ENCODE measurements at regions of chr7 and their contacts with region 1.

Region 1: GRCh38 chr7:28921822-28922221 is 36.3 kb downstream of the TRIL start:
- DNase-seq: peak; percentile 67
- H3K4me3 ChIP-seq: no peak overlapping the region
- H3K27ac ChIP-seq: no peak overlapping the region
- H3K4me1 ChIP-seq: no peaks in the 10 kb centered on the region
- H3K27me3 ChIP-seq: peaks cover 4 to 6% of the 10 kb centered on the region in 2 experiments
- CTCF ChIP-seq: peak; percentile 74 to 76
- POLR2A ChIP-seq: no peak

Region 2: DNA sequence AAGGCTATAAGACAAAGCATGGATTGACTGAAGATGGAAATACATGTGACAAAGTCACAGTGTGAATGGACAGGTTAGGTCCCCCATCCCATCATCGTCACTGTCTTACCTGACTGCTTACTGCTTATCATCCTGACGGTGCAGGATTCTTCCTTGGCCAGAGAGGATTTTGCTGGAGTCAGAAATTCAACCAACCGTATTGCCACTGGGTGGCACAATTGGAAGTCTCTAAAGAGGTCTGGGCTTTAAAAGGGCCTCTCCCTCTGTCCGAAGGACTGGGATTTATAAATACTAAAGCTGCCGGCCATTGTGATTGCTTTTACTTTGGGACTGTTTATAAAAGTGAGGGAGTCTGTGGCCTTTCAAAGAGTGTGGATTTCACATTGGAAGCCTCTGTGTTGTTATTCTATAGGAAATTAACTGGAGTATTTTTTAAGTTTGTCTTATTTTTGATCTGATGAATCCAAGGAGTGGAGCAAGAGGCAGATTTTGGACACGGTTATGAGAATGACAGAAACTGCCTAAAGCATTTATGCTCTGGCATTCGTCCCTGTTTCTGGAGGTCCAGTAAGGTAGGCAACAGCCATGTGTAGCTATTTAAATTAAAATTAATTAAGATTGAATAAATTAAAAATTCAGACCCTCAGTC is 622.8 kb before region 1 on chr7:
- CTCF ChIA-PET with region 1: interaction called, 5 read pairs
- POLR2A ChIA-PET with region 1: no interaction called
- dilution Hi-C with region 1: no loop called
- intact Hi-C with region 1: loop called (anchors 5 kb)
- DNase-seq: peak; percentile 53
- H3K4me3 ChIP-seq: no peak overlapping the region
- H3K27ac ChIP-seq: no peak overlapping the region
- H3K4me1 ChIP-seq: no peaks in the 10 kb centered on the region
- H3K27me3 ChIP-seq: no peaks in the 10 kb centered on the region
- CTCF ChIP-seq: peak; percentile 36 to 48
- POLR2A ChIP-seq: no peak

Region 3: DNA sequence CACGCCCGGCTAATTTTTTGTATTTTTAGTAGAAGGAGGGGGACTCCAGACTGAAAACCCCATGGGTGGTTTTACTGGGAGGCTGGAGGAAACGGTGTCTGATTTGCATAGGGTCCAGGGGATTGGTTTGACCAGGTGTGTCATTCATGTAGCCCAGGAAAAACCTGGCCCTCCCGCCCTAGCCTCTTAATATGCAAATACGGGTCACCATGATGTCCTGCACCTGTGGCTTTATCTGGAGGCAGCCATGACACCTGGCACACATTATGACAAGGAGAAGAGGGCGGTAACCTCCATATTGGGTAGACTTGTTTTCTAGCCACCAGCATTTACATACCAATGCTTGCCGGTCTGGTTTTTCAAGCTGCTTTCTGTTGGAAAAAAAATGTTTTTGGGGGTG is 31.7 kb before region 1 on chr7:
- CTCF ChIA-PET with region 1: interaction called, 12 read pairs
- POLR2A ChIA-PET with region 1: no interaction called
- dilution Hi-C with region 1: no loop called
- intact Hi-C with region 1: no loop called
- DNase-seq: no peak
- H3K4me3 ChIP-seq: no peak overlapping the region
- H3K27ac ChIP-seq: no peak overlapping the region
- H3K4me1 ChIP-seq: no peaks in the 10 kb centered on the region
- H3K27me3 ChIP-seq: peaks cover 5 to 6% of the 10 kb centered on the region in 2 experiments
- CTCF ChIP-seq: no peak
- POLR2A ChIP-seq: no peak

Region 4: GRCh38 chr7:28955718-28956619 is 34.1 kb after region 1 on chr7:
- CTCF ChIA-PET with region 1: interaction called, 518 read pairs
- POLR2A ChIA-PET with region 1: interaction called, 4 read pairs
- dilution Hi-C with region 1: no loop called
- intact Hi-C with region 1: loop called (anchors 1 kb)
- DNase-seq: peak; percentile 57
- H3K4me3 ChIP-seq: peak overlapping the region in 2 of 3 experiments; percentile 13 to 16
- H3K27ac ChIP-seq: no peak overlapping the region
- H3K4me1 ChIP-seq: peaks cover 11% of the 10 kb centered on the region
- H3K27me3 ChIP-seq: peaks cover 18 to 26% of the 10 kb centered on the region in 2 experiments
- CTCF ChIP-seq: peak; percentile 77 to 86
- POLR2A ChIP-seq: no peak

Region 5: DNA sequence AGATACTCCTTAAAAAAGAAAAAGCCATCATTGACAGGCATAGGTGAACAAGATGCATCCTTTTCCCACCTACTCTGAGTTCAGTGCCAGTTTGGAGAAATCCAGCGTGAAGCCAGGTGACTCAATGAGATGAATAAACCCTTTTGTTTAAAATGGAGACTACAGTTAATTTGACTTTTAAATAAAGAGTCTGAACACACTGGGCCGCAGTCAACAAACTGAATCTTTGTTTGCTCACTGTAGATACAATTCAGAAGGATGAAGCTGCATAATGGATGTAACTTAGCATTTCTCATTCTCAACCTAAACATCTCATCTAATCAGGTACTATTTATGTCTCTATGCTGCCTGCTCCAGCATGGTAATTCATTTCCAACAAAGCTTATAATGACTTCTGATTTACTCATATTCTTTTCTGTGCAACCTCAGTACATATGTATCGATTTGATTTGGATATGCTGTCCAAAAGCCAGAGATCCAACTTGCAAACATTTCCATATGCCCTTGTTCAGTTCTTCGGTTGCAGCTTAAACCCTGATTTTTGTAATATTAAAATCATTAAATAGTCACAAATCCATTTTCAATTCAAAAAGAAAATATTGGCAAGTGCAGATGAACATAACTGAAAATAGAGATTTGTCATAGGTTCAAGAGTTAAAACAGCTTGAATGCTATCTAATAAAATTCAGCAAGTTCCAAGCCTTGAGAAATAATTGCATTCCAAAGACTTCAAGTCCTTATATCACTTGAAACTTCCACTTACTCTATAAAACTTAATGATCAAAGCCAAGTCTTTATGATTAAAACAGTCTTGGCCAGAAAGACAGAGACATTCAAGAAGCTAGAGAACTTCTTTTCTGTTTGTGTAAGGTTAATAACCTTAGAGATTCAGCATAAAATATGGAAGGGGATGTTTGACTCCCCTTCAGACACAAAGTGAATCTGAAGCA is 156.8 kb after region 1 on chr7:
- CTCF ChIA-PET with region 1: interaction called, 16 read pairs
- POLR2A ChIA-PET with region 1: no interaction called
- dilution Hi-C with region 1: no loop called
- intact Hi-C with region 1: no loop called
- DNase-seq: no peak
- H3K4me3 ChIP-seq: no peak overlapping the region
- H3K27ac ChIP-seq: no peak overlapping the region
- H3K4me1 ChIP-seq: no peaks in the 10 kb centered on the region
- H3K27me3 ChIP-seq: peaks cover 2 to 5% of the 10 kb centered on the region in 2 experiments
- CTCF ChIP-seq: no peak
- POLR2A ChIP-seq: no peak

Region 6: GRCh38 chr7:29276199-29276598 is 354.4 kb after region 1 on chr7:
- CTCF ChIA-PET with region 1: no interaction called
- POLR2A ChIA-PET with region 1: no interaction called
- dilution Hi-C with region 1: no loop called
- intact Hi-C with region 1: no loop called
- DNase-seq: no peak
- H3K4me3 ChIP-seq: no peak overlapping the region
- H3K27ac ChIP-seq: no peak overlapping the region
- H3K4me1 ChIP-seq: peaks cover under 1% of the 10 kb centered on the region
- H3K27me3 ChIP-seq: no peaks in the 10 kb centered on the region
- CTCF ChIP-seq: no peak
- POLR2A ChIP-seq: no peak

Region 7: DNA sequence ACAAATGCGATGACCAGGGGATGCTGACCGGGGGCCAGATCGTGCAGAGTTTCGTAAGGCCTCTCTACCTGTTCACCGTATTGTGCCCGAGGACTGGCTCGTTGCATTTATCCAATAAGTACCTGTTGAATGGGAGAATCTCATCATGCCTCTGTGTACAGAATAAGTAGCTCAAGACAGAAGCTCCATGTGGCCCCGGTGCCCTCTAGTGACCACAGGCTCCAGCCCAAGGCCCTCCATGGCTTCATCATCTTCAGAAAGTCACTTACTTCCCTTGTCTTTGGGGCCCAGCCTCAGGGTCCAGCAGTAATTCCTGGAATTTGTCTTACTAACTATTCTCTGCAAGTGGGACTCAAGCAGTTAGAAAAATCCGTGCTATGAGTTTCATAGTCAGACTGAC is 423.8 kb after region 1 on chr7:
- CTCF ChIA-PET with region 1: interaction called, 28 read pairs
- POLR2A ChIA-PET with region 1: no interaction called
- dilution Hi-C with region 1: no loop called
- intact Hi-C with region 1: loop called (anchors 1 kb)
- DNase-seq: peak; percentile 41
- H3K4me3 ChIP-seq: no peak overlapping the region
- H3K27ac ChIP-seq: no peak overlapping the region
- H3K4me1 ChIP-seq: no peaks in the 10 kb centered on the region
- H3K27me3 ChIP-seq: peaks cover 1 to 5% of the 10 kb centered on the region in 2 experiments
- CTCF ChIP-seq: peak; percentile 45 to 49
- POLR2A ChIP-seq: no peak

Region 8: DNA sequence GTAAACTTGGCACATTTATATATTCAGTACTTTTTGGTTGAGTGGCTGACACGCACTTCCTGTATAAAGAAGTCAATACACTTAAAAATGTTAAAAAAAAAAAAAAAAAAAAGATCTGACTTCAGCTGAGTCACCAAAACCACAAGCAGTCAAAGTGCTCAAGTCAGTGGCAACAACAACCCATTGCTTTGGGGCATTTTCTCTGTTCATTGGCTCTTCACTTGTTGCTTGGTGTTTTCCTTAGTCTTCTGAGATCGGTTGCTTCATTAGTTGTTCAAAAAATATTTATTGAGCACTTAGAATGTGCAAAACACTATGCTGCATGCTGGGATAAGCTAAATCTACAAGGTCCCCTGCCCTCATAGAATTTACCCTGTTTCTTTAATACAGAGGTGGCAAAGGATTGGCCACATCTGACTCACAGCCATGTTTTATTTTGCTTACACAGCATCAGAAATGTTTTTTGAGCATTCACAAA is 1426.3 kb after region 1 on chr7:
- CTCF ChIA-PET with region 1: no interaction called
- POLR2A ChIA-PET with region 1: no interaction called
- dilution Hi-C with region 1: no loop called
- intact Hi-C with region 1: no loop called
- DNase-seq: peak; percentile 76
- H3K4me3 ChIP-seq: no peak overlapping the region
- H3K27ac ChIP-seq: peak overlapping the region; percentile 30
- H3K4me1 ChIP-seq: peaks cover 11% of the 10 kb centered on the region
- H3K27me3 ChIP-seq: no peaks in the 10 kb centered on the region
- CTCF ChIP-seq: no peak
- POLR2A ChIP-seq: no peak

Measured in endothelial cell of umbilical vein (primary cell).